ENCODE measurements at regions of chr2 and their contacts with region 1.

Region 1: GRCh38 chr2:9630749-9631483 is at the start of gene YWHAQ:
- DNase-seq: peak; percentile 99
- H3K4me3 ChIP-seq: peak within 1 kb of the TSS; percentile 81 to 92
- H3K27ac ChIP-seq: peak within 1 kb of the TSS; percentile 97
- H3K4me1 ChIP-seq: peaks cover 11 to 16% of the 10 kb centered on the region in 2 donors
- H3K27me3 ChIP-seq: no peaks in the 10 kb centered on the region
- CTCF ChIP-seq: no peak
- POLR2A ChIP-seq: peak; percentile 94 to 98
- total RNA-seq, gene YWHAQ: 155 to 275 (median 254) TPM

Region 2: DNA sequence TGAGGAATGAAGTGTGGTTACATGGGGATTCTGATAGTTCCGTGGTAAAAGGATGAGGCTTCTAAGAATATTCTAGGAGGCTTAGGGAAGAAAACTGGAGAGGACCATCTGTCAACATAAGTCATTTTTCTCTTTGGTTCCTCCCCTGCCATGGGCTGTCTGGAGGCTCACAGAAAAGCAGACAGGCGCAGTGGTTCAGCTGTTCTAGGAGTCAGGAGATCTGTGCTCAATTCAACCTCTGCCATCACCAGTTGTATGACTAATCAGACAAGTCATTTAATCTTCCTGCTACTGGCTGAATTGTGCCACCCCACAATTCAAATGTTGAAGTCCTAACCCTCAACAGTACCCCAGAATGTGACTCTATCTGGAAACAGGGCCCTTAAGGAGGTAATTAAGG is 111.7 kb before region 1 on chr2:
- intact Hi-C with region 1: no loop called
- DNase-seq: no peak
- H3K4me3 ChIP-seq: no peak overlapping the region
- H3K27ac ChIP-seq: no peak overlapping the region
- H3K4me1 ChIP-seq: no peaks in the 10 kb centered on the region
- H3K27me3 ChIP-seq: no peaks in the 10 kb centered on the region
- CTCF ChIP-seq: no peak
- POLR2A ChIP-seq: no peak

Region 3: GRCh38 chr2:9555297-9556141 is 75.4 kb before region 1 on chr2 and contains the start of gene ADAM17:
- intact Hi-C with region 1: loop called (anchors 10 kb)
- DNase-seq: peak; percentile 95 to 96
- H3K4me3 ChIP-seq: peak within 1 kb of the TSS; percentile 80 to 87
- H3K27ac ChIP-seq: peak within 1 kb of the TSS; percentile 95 to 97
- H3K4me1 ChIP-seq: peaks cover 4 to 17% of the 10 kb centered on the region in 2 donors
- H3K27me3 ChIP-seq: no peaks in the 10 kb centered on the region
- CTCF ChIP-seq: peak; percentile 42 to 89 (median 58)
- POLR2A ChIP-seq: peak; percentile 95 to 96
- total RNA-seq, gene ADAM17: 7.7 to 47.0 (median 27.7) TPM